ENCODE measurements at regions of chr10 and their contacts with region 1.

Region 1: GRCh38 chr10:67767245-67767644 is 70.7 kb downstream of the DNAJC12 start:
- DNase-seq: peak in 1 of 3 donors; percentile 11
- H3K4me3 ChIP-seq: no peak overlapping the region
- H3K27ac ChIP-seq: no peak overlapping the region
- H3K4me1 ChIP-seq: peaks cover 3 to 13% (median 10%) of the 10 kb centered on the region in 4 experiments
- H3K27me3 ChIP-seq: no peaks in the 10 kb centered on the region

Region 2: DNA sequence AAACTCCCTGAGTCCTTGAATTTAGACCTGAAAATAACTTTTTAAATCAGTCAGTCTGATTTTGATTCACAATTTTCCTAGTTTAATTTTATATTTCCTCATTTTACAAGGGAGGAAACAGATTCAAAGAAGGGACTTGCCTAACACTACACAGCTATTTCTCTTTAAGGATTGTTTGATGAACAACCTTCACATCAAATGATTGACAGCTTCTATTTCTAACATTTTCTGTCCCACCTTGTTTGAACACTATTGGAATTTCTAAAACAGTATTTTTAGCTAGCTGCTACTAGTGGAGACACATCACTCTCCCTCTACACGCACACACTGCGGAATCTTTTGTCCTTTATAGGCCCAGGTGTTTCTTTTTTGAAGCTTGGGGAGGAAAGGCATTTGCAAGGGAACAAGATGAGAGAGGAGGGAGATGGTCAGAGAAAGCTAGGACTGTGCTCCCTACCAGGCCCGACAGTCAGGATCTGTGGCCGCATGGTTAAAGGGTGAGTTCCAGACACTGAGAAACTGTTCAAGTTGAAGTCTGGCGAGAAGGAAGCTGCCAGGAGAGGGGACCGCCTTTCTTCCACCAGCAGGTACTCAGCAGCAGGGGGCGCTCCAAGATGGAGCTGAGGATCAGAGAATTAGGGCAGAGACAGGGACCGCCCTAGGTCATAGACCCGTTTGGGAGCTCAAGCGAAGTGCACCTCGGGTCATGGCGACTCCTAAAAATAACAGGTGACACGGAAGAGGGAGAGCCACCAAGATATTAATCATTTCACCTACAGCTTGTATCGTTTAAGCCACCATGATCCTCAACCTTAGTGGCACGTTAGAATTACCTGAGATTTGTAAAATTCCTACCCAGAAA is 21.0 kb after region 1 on chr10:
- CTCF ChIA-PET with region 1: interaction called, 10 read pairs
- POLR2A ChIA-PET with region 1: no interaction called
- DNase-seq: peak; percentile 47 to 65 (median 55)
- H3K4me3 ChIP-seq: peak overlapping the region in 1 of 7 experiments; percentile 17
- H3K27ac ChIP-seq: no peak overlapping the region
- H3K4me1 ChIP-seq: peaks cover 0 to 23% (median 12%) of the 10 kb centered on the region in 4 experiments
- H3K27me3 ChIP-seq: no peaks in the 10 kb centered on the region

Region 3: DNA sequence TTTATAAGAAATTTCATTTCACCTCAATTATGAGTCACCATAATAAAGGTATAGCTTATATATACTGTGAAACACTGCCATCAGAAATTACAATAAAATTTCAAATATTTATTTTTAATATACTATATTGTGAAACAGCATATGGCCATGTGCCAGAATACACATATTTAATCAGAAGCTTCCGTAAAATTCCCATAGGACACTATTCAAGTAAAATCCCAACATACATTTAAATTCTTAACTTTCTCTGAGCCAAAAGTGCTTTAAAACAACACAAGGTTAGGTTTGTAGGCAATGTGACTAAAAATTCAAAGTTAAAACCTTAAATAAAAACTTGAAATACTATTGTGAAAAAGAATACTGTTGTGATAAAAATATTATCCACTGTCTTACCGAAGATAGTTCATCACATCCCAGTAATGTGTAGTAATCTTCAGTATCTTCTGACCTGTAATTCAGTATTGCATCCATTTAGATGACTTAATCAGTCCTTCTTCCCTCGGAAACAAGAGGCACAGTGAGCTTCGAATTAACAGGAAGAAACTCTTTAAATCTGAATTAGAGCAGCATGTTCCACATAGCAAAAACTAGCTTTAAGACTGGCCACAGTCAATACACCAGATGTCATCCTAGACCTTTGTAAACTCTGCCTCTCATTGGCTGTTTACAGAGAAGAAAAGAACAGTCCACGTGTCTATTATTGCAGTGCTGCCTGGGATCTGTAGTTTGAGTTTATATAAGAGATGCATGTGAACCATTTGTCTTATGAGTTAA is 70.5 kb after region 1 on chr10 and contains the start of gene DNAJC12:
- CTCF ChIA-PET with region 1: no interaction called
- POLR2A ChIA-PET with region 1: no interaction called
- DNase-seq: peak; percentile 30 to 80 (median 73)
- H3K4me3 ChIP-seq: peak within 1 kb of the TSS in 6 of 7 experiments; percentile 16 to 69 (median 49)
- H3K27ac ChIP-seq: no peak within 1 kb of the TSS
- H3K4me1 ChIP-seq: peaks cover 4 to 13% (median 5%) of the 10 kb centered on the region in 4 experiments
- H3K27me3 ChIP-seq: no peaks in the 10 kb centered on the region

Region 4: GRCh38 chr10:67861750-67862460 is 94.7 kb after region 1 on chr10:
- CTCF ChIA-PET with region 1: no interaction called
- POLR2A ChIA-PET with region 1: no interaction called
- DNase-seq: no peak
- H3K4me3 ChIP-seq: no peak overlapping the region
- H3K27ac ChIP-seq: no peak overlapping the region
- H3K4me1 ChIP-seq: peaks cover 0 to 3% (median 0%) of the 10 kb centered on the region in 4 experiments
- H3K27me3 ChIP-seq: no peaks in the 10 kb centered on the region